SK-N-SH (cell line): ENCODE measurements at regions of chr5 and their contacts with region 1.

Region 1: GRCh38 chr5:170633235-170634081 is 129.6 kb downstream of the KCNIP1 start:
- DNase-seq: peak; percentile 88
- H3K4me3 ChIP-seq: peak overlapping the region; percentile 43 to 74
- H3K27ac ChIP-seq: peak overlapping the region; percentile 91 to 96
- H3K4me1 ChIP-seq: peaks cover 7 to 31% of the 10 kb centered on the region in 2 experiments; a peak in 2 of 4 replicates
- H3K27me3 ChIP-seq: no peaks in the 10 kb centered on the region
- CTCF ChIP-seq: no peak
- EP300 ChIP-seq: no peak
- RAD21 ChIP-seq: no peak

Region 2: DNA sequence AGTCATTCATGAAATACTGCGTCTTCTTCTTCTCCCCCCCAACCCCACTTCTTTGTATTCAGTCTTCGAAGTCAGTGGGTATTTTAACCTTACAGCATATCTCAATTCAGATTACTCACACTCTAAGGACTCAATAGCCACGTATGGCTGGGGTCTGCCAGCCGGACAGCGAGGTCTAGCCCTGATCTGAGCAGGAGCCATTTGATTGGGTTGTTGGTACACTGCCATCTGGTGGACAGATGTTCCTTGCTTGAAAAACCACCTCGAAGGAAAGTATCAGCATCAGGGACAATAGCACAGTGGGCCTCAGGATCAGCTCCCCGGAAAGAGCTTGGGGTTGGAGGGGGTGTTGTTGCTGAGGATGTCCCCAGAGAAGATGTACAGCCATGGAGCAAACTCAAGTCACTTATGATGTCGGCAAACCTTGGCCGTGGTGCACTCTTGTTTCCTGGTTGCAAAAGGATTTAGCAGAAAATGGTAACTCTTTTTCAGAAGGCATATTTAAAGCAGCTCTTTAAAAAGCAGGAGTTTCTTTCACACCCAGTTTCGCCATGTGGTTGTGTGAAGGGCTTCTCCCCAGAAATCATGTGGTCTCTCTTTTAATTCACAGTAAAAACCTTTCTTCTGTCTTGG is 212.6 kb before region 1 on chr5:
- CTCF ChIA-PET with region 1: interaction called, 96 read pairs
- POLR2A ChIA-PET with region 1: interaction called, 3 read pairs
- DNase-seq: peak; percentile 77
- H3K4me3 ChIP-seq: no peak overlapping the region
- H3K27ac ChIP-seq: no peak overlapping the region
- H3K4me1 ChIP-seq: peaks cover 0 to 9% of the 10 kb centered on the region in 2 experiments; a peak in 1 of 4 replicates
- H3K27me3 ChIP-seq: peaks cover 20% of the 10 kb centered on the region
- CTCF ChIP-seq: peak; percentile 84
- EP300 ChIP-seq: no peak
- RAD21 ChIP-seq: peak; percentile 79

Region 3: DNA sequence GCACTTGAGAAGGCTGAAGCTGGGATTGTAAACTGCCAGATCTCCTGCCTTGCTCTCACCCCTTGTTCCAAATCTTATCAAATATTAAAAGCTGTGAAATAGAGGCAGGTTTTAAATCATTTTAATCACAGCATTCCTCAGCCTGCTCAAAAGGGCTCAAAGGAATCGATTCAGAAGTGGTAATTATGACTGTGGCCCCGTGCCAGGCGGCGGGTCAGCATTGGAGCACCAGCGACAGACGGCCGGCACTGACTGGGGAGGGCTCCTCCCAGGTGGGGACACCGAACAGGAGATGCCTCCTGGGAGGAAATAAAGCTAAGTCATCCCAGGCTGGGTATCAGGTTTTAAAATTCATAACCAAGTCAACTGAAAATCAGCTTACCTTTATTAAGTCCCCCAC is 63.0 kb before region 1 on chr5:
- CTCF ChIA-PET with region 1: interaction called, 10 read pairs
- POLR2A ChIA-PET with region 1: no interaction called
- DNase-seq: no peak
- H3K4me3 ChIP-seq: no peak overlapping the region
- H3K27ac ChIP-seq: no peak overlapping the region
- H3K4me1 ChIP-seq: no peaks in the 10 kb centered on the region
- H3K27me3 ChIP-seq: peaks cover 4% of the 10 kb centered on the region
- CTCF ChIP-seq: no peak
- EP300 ChIP-seq: no peak
- RAD21 ChIP-seq: no peak

Region 4: DNA sequence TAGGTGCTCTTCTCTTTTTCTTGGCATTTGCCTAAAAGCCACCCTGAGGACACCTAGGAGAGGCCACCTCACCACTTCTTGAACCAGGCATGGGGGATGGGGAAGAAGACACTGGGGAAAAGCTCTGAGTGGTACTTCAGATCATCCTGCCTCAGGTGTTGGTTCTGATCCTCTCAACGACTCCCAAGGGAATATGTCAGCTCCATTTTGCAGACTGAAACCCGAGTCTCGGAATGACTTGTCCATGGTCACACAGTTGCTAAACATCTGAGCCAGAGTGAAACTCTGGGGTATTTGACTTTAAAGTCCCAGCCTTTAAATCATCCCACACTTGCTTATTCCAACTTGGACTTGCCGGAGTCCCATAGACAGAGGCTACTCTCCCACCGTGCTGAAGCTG is 29.5 kb after region 1 on chr5:
- CTCF ChIA-PET with region 1: interaction called, 30 read pairs
- POLR2A ChIA-PET with region 1: no interaction called
- DNase-seq: no peak
- H3K4me3 ChIP-seq: no peak overlapping the region
- H3K27ac ChIP-seq: no peak overlapping the region
- H3K4me1 ChIP-seq: no peaks in the 10 kb centered on the region
- H3K27me3 ChIP-seq: no peaks in the 10 kb centered on the region; the same call in 1 of the 2 replicates
- CTCF ChIP-seq: no peak
- EP300 ChIP-seq: no peak
- RAD21 ChIP-seq: no peak

Region 5: DNA sequence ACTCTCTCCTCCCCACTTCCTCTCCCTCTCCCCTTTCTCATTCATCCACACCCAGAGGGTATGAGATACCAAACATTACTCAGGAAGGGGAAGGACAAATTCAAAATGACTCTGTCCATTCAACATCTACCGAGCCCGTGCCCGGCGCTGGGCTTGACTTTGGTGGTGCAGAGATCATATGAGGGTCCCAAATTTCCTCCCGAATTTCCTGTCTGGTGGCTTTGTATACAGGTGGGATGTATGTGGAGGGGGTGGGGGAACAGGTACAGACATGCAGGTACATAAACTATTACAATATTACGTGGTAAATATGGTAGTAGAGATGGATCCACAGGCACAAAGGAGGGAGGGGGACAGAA is 128.2 kb after region 1 on chr5:
- CTCF ChIA-PET with region 1: no interaction called
- POLR2A ChIA-PET with region 1: no interaction called
- DNase-seq: no peak
- H3K4me3 ChIP-seq: no peak overlapping the region
- H3K27ac ChIP-seq: no peak overlapping the region
- H3K4me1 ChIP-seq: peaks cover 0 to 7% of the 10 kb centered on the region in 2 experiments; a peak in 1 of 4 replicates
- H3K27me3 ChIP-seq: no peaks in the 10 kb centered on the region; the same call in 1 of the 2 replicates
- CTCF ChIP-seq: no peak
- EP300 ChIP-seq: no peak
- RAD21 ChIP-seq: no peak

Region 6: DNA sequence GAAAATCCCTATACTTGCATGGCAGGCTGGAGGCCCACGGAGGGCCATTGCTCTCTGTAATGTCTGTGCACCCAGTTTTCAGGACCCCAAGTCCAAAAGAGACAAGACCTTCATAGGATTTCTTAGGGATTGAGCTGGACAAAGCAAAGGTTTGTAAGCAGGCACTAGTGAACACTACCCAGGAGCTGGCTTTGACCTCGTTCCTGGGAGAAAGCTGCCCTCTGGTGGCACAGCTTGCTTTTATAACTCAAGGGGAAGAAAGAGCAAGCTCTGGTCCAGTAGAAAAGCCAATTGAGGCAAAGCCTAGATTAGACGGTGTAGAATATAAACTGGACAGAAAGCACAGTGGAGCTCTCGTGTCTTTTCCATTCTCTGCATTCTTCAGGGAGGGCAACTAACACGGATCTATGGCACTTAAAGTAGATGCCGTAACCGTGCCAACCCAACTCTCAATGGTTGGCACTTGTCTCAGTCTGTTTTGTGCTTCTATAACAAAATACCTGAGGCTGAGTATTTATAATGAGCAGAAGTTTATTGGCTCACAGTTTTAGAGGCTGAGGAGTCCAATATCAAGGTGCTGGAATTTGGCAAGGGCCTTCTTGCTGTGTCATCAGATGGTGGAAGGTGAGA is 158.0 kb after region 1 on chr5:
- CTCF ChIA-PET with region 1: interaction called, 98 read pairs
- POLR2A ChIA-PET with region 1: no interaction called
- DNase-seq: peak; percentile 76
- H3K4me3 ChIP-seq: no peak overlapping the region; a peak in 1 of 4 replicates
- H3K27ac ChIP-seq: no peak overlapping the region
- H3K4me1 ChIP-seq: peaks cover 0 to 5% of the 10 kb centered on the region in 2 experiments; a peak in 1 of 4 replicates
- H3K27me3 ChIP-seq: no peaks in the 10 kb centered on the region; the same call in 1 of the 2 replicates
- CTCF ChIP-seq: peak; percentile 63
- EP300 ChIP-seq: no peak
- RAD21 ChIP-seq: peak; percentile 96